Head of caudate nucleus (tissue), 42 donors: ENCODE measurements at regions of chr14 and their contacts with region 1.

Region 1: DNA sequence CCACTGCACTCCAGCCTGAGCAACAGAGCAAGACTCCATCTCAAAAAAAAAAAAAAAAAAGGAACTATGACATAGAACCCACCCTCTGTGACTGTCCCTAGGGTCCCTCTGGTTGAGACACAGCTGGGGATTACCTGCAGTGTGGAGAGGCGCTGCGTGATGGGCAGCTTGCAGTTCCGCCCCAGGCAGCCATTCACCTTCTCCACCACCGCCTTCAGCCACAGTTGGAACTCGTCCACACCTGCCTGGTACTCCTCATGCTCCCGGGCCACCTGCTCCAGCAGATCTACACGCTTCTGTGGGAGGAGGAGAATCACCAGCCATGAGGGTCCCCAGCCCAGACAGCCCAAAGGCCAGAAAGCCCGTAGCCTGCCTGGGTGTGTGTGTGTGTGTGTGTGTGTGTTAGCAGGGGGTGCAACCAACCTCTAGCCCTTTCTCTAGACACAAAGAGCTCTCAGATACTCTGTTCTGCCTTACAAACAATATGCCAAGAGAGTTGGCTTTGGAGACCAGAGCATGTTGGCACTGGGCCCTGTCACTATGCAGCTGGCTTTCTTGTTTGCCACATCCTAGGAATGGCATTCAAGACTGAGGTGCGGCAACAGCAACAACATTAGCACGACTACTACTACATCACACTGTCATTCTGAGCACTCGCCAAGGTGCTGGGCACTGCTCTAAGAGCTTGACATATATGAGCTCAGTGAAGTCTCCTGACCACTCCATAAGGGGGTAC is 59.2 kb downstream of the SYNE3 start:
- DNase-seq: peak; percentile 44 to 93 (median 84)

Region 2: GRCh38 chr14:95011445-95012006 is 445.7 kb before region 1 on chr14:
- intact Hi-C with region 1: no loop called
- DNase-seq: peak in 17 of 42 donors; percentile 4 to 53 (median 17)

Region 3: DNA sequence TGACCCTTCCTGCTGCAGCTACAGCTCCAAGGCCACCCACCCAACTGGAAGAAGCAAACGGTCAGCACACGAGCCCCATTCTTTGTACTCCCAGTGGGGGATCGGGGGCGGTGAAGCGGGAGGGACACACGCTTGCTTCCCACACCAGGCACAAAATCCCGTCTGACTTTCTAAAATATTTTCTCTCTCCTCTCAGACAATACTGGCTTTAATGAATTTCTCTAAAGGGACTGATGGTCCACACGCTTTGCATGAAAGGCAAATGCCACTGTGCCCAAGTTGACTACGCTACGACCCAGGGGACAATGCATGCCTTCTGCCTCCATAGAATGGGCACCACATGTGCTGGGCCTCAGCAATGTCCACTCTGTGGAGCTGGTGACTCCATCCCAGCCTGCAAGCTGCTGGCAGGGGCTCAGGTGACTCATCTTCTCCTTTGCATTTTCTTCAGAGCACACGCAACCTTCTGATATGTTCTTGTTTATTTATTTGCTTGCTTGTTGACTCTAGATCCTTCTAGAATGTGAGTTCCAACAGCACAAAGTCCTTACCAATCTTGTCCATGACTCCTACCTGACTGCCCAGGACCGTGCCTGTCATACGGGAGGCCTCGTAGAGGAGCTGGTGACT is 43.7 kb after region 1 on chr14:
- intact Hi-C with region 1: loop called (anchors 5 kb)
- DNase-seq: peak in 32 of 42 donors; percentile 33 to 88 (median 62)